Activated CD8-positive, alpha-beta T cell treated with anti-CD3 and anti-CD28 coated beads for 36 hours (primary cell): ENCODE measurements at regions of chr3 and their contacts with region 1.

Region 1: GRCh38 chr3:36182024-36182423 is 198.3 kb upstream of the STAC start:
- DNase-seq: no peak
- ATAC-seq: no peak
- H3K4me3 Mint-ChIP-seq: no peak overlapping the region
- H3K27ac Mint-ChIP-seq: no peak overlapping the region
- H3K4me1 Mint-ChIP-seq: no peaks in the 10 kb centered on the region
- H3K27me3 Mint-ChIP-seq: no peaks in the 10 kb centered on the region
- CTCF ChIP-seq: no peak

Region 2: DNA sequence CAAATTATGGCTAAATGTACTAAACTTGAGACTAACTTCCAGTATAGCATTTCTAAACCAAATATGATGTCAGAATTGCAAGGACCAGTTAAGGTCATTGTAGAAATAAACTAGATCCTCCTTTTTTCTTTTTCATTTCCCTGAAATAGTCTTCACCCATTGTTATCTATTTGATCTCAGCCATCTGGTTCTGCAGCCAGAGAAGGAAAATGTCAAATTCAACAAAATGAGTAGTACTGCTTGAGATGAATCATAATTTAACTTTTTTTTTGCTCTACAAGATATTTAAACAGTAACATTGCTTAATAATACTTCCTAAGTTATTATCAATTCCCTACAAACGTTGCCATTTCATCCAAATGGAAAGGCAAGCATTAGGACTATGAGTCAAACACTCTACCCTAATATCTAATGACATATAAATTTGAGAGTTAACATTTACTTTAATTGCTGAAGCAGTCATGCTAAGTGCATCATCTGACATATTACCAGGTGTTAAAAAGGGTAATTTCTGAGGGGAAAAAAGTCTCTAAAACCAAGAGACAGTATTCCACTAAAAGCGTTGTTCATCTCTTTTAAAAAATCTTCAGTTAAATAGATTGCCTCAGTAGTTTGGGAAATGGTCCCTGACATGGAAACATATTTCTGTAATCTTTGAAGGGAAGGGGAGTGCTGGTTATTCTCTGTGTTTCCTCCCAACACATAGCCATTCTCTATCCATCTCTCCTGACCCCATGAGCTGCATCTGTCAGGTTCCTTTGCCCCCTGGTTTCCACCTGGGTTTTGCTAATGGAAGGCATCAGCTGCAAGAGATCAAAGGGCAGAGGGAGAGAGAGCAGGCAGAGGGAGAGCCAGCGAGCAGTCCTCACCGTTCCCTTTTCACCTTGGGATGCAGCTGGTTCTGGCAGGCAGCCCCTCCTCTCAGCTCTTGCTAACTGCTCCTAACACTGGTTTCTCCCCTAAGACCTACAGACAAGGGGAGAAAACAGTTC is 404.2 kb before region 1 on chr3:
- CTCF ChIA-PET with region 1: no interaction called
- POLR2A ChIA-PET with region 1: no interaction called
- intact Hi-C with region 1: loop called (anchors 5 kb)
- DNase-seq: no peak
- ATAC-seq: no peak
- H3K4me3 Mint-ChIP-seq: no peak overlapping the region
- H3K27ac Mint-ChIP-seq: no peak overlapping the region
- H3K4me1 Mint-ChIP-seq: no peaks in the 10 kb centered on the region
- H3K27me3 Mint-ChIP-seq: no peaks in the 10 kb centered on the region
- CTCF ChIP-seq: no peak